ENCODE measurements at regions of chr7 and their contacts with region 1.

Region 1: GRCh38 chr7:30348083-30348560 is 63.7 kb downstream of the ZNRF2 start:
- DNase-seq: peak; percentile 70
- ATAC-seq: peak; percentile 93
- H3K4me3 Mint-ChIP-seq: peak overlapping the region; percentile 61
- H3K27ac Mint-ChIP-seq: peak overlapping the region; percentile 83
- H3K4me1 Mint-ChIP-seq: peaks cover 57% of the 10 kb centered on the region
- H3K27me3 Mint-ChIP-seq: no peaks in the 10 kb centered on the region

Region 2: DNA sequence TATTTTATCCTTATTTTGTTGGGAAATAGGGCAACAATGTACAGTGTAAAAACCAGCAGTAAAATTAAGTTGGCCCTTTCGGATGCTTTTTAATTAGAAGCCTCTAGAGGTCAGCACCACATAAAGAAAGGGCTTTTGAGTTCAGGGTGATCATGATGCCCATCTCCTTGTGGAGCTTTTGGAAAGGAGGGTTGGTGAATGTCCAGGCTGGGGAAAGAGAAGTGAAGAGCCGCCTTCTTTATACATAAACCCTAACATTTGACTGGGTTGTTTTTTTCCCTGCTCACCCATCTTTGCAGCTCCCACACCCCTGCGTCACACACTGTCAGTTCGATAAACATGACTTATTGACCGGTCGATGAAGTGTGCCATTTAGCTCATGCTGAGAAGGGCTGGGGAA is 183.6 kb before region 1 on chr7:
- CTCF ChIA-PET with region 1: interaction called, 15 read pairs
- POLR2A ChIA-PET with region 1: no interaction called
- DNase-seq: no peak
- ATAC-seq: no peak
- H3K4me3 Mint-ChIP-seq: no peak overlapping the region
- H3K27ac Mint-ChIP-seq: peak overlapping the region; percentile 12
- H3K4me1 Mint-ChIP-seq: peaks cover 43% of the 10 kb centered on the region
- H3K27me3 Mint-ChIP-seq: no peaks in the 10 kb centered on the region

Region 3: GRCh38 chr7:30276203-30276900 is 71.8 kb before region 1 on chr7:
- CTCF ChIA-PET with region 1: interaction called, 135 read pairs
- POLR2A ChIA-PET with region 1: interaction called, 3 read pairs
- DNase-seq: peak; percentile 65
- ATAC-seq: peak; percentile 73
- H3K4me3 Mint-ChIP-seq: no peak overlapping the region
- H3K27ac Mint-ChIP-seq: no peak overlapping the region
- H3K4me1 Mint-ChIP-seq: peaks cover 6% of the 10 kb centered on the region
- H3K27me3 Mint-ChIP-seq: no peaks in the 10 kb centered on the region

Region 4: GRCh38 chr7:30284298-30285066 is 63.6 kb before region 1 on chr7 and contains the start of gene ZNRF2:
- CTCF ChIA-PET with region 1: interaction called, 135 read pairs
- POLR2A ChIA-PET with region 1: interaction called, 19 read pairs
- DNase-seq: peak; percentile 99
- ATAC-seq: peak; percentile 92
- H3K4me3 Mint-ChIP-seq: peak within 1 kb of the TSS; percentile 79
- H3K27ac Mint-ChIP-seq: peak within 1 kb of the TSS; percentile 87
- H3K4me1 Mint-ChIP-seq: peaks cover 42% of the 10 kb centered on the region
- H3K27me3 Mint-ChIP-seq: no peaks in the 10 kb centered on the region
- total RNA-seq, gene ZNRF2: 15.1 to 15.2 TPM

Region 5: GRCh38 chr7:30322271-30323005 is 25.7 kb before region 1 on chr7:
- CTCF ChIA-PET with region 1: interaction called, 46 read pairs
- POLR2A ChIA-PET with region 1: interaction called, 28 read pairs
- DNase-seq: peak; percentile 48
- ATAC-seq: peak; percentile 74
- H3K4me3 Mint-ChIP-seq: peak overlapping the region; percentile 79
- H3K27ac Mint-ChIP-seq: peak overlapping the region; percentile 97
- H3K4me1 Mint-ChIP-seq: peaks cover 43% of the 10 kb centered on the region
- H3K27me3 Mint-ChIP-seq: no peaks in the 10 kb centered on the region

Region 6: DNA sequence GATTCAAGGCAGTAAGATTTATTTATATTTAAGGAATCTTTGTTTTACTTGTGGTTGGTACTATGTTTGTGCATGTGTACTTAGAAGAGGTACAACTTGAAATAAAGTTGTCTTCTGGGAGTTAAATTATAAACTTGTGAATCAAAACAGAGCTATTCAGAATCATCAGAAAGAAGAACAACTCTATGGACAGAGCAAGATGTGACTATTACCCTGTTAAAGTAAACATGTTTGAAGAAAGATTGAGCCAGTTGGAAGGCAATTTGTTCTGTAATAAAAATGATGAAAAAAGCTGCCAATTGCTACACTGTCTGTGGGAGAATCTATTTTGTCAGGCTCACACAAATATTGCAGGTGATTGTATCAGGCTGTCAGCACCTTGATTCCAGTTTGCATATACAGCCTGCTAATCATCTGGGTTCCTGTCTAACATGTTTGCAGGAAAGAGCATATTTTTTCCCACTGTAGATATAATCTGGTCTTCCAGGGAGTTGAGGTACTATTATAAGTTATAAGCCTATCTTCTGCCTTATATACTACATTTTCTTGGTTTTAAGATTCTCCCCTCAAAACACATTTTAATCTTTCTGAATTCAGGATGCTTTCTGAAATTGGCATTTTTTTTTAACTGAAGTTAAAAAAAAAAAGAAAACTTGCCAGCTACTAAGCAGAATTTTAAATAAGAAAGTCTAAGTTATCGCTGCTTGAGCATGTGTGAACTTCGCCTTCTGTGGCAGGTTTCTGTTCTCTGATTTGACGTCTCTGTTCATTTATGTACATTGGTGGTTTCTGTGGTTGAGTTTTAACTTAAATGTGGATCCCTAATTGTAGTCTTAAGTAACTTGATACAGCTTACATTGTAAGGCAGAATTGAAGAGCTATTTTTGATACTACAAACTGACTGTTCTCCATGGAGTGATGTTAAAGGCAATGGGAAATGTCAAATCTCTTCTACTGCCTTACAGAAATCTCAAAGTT is 17.7 kb before region 1 on chr7:
- CTCF ChIA-PET with region 1: interaction called, 13 read pairs
- POLR2A ChIA-PET with region 1: interaction called, 3 read pairs
- DNase-seq: peak; percentile 54
- ATAC-seq: peak; percentile 90
- H3K4me3 Mint-ChIP-seq: peak overlapping the region; percentile 63
- H3K27ac Mint-ChIP-seq: peak overlapping the region; percentile 82
- H3K4me1 Mint-ChIP-seq: peaks cover 42% of the 10 kb centered on the region
- H3K27me3 Mint-ChIP-seq: no peaks in the 10 kb centered on the region

Measured in activated CD8-positive, alpha-beta T cell treated with anti-CD3 and anti-CD28 coated beads, Interleukin-2, amount 10 ng/mL, durations not matched to agents 7 days and 5 days (primary cell).